Activated CD4-positive, alpha-beta T cell treated with anti-CD3 and anti-CD28 coated beads, Interleukin-2, amount 10 ng/mL, durations not matched to agents 24 days and 14 days (primary cell): ENCODE measurements at regions of chr2 and their contacts with region 1.

Region 1: DNA sequence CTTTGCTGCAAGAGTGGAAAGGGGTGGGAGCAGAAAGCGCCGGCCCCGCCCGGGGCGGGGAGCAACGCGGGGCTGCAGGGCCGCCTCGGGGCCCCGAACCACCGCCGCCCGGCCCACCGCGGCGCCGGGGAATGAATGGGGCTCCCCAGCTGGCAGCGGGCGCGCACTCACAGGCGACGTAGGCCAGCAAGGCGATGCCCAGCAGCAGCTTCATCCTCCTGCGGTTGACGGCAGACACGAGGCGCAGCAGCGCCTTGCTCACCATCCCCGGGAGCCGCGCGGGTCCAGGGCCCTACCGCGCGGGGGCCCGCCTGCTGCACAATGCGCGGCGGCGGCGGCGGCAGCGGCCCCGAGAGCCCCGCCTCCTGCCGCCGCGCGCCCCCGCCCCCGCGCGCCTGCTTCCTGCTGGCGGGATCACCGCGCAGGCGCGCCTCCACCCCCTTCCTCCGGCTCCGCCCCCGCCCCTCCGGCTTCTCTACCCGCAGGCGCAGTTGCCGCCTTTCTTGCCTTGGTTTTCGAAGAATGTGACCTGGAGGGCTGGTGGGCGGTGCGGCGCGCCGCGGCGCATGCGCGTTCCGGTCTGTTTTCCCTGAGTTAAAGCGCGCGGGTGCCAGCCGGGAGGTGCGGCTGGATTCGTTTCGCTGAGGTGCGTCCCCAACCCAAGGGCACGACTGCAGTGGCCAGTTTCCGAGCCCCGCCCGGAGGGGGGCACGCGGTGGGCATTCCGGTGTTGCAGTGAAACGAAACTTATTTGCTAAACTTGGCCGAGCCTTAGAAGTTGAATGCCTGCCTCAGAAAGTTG is at the start of gene UXS1:
- DNase-seq: peak; percentile 99
- H3K4me3 Mint-ChIP-seq: peak within 1 kb of the TSS; percentile 90
- H3K27ac Mint-ChIP-seq: peak within 1 kb of the TSS; percentile 89
- H3K4me1 Mint-ChIP-seq: peaks cover 38% of the 10 kb centered on the region
- H3K27me3 Mint-ChIP-seq: peaks cover 11% of the 10 kb centered on the region
- total RNA-seq, gene UXS1: 34.9 and 37.6 TPM in 2 replicates

Region 2: DNA sequence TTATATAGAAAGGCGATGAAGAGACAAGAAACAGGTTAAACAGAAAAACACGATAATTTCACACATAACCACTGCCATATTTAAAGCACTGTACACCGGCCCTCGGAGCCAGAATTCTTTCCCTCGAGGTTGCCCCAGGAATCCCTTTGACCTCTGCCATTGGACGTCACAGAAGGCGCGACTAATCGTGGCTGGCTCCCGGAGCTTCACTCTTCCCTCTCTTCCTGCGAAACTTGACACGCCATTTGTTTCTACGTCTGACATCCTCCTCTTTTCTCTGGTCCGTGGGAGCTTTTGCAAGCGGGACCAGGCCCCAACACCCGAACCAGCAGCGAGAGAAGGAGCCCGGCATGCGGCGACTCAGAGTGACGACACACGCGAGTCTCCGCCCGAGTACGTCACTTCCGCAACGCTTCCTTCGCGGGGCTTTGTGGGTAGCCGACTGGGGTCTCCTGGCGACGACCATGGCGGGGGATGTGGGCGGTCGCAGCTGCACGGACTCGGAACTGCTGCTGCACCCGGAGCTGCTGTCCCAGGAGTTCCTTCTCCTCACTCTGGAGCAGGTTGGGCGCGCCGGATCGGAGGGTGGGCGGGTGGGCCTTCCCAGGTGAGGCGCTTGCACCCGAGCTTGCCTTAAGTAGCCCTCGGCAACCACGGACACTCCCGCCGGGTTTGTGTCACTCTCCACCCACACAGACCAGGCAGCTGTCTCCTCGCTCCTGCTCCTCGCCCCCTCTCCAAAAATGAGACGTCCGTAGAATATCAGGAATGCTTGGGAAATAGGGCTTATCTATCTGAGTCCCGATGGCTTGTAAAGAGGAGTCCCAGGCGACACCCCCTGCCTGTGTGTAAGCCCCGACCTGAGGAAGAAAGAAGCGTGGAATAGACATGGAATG is 856.8 kb before region 1 on chr2 and contains the start of gene C2orf49:
- intact Hi-C with region 1: loop called (anchors 1 kb)
- DNase-seq: peak; percentile 97
- H3K4me3 Mint-ChIP-seq: peak within 1 kb of the TSS; percentile 92
- H3K27ac Mint-ChIP-seq: peak within 1 kb of the TSS; percentile 100
- H3K4me1 Mint-ChIP-seq: peaks cover 22% of the 10 kb centered on the region
- H3K27me3 Mint-ChIP-seq: no peaks in the 10 kb centered on the region
- total RNA-seq, gene C2orf49: 20.8 and 25.5 TPM in 2 replicates

Region 3: DNA sequence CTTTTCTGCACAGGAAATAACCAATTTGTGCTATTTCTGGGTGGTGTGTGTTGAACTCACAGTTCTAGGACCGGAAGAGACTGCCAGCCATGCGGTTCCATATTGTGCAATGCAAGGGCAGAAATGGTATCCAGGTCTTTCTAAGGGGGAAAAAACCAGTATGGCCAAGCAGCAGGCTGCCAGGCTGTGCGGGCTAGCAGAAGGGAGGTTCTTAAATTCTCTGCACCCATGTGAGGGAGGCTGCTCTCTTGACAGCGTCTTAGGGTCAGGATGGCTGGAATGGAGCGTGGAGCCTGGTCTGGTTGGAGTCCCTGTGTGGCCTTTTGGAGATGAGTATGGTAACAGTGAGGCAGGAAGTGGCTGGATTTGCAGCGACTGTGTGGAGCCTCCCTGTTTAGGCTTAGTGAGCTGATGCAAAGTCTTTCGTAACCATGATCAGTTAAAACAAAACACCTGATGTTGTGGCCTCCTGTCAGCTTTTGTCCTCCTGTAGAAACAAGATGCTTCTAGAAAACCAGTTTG is 396.8 kb before region 1 on chr2:
- intact Hi-C with region 1: loop called (anchors 5 kb)
- DNase-seq: peak; percentile 85
- H3K4me3 Mint-ChIP-seq: peak overlapping the region; percentile 63
- H3K27ac Mint-ChIP-seq: peak overlapping the region; percentile 93
- H3K4me1 Mint-ChIP-seq: peaks cover 80% of the 10 kb centered on the region
- H3K27me3 Mint-ChIP-seq: no peaks in the 10 kb centered on the region

Region 4: DNA sequence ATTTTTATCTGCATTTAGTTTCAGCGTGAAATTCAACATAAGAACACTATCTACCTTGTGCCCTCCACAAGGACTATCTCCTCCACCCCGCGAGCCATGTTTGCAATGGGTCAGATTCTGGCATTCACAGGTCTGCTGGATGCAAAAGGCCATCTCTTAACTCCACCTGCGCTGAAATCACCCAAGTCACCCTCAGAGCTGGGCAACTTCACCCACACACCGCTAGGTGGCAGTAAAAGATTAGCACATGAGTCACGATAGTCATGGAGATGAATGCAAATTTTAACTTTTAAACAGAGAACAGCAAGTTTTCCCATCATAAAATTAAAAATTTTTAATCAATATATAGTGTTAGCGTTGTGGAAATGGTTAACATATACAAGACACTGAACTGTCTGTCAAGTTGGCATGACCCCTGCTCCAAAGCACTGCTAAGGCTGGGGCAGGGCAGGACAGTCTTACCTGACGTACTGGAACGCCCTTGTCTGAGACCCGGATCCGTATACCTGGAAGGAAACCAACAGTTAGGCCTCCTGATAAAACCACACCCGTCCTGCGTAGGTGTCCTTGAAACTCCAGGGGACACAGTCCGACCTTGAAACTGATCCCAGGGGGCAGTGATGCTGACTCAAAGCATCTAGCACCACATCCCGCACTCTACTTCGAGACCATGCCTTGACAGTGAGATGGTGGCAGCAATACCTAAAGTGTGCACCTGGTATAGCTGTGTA is 89.7 kb before region 1 on chr2:
- intact Hi-C with region 1: loop called (anchors 1 kb)
- DNase-seq: peak; percentile 90
- H3K4me3 Mint-ChIP-seq: no peak overlapping the region
- H3K27ac Mint-ChIP-seq: no peak overlapping the region
- H3K4me1 Mint-ChIP-seq: peaks cover 15% of the 10 kb centered on the region
- H3K27me3 Mint-ChIP-seq: no peaks in the 10 kb centered on the region

Region 5: DNA sequence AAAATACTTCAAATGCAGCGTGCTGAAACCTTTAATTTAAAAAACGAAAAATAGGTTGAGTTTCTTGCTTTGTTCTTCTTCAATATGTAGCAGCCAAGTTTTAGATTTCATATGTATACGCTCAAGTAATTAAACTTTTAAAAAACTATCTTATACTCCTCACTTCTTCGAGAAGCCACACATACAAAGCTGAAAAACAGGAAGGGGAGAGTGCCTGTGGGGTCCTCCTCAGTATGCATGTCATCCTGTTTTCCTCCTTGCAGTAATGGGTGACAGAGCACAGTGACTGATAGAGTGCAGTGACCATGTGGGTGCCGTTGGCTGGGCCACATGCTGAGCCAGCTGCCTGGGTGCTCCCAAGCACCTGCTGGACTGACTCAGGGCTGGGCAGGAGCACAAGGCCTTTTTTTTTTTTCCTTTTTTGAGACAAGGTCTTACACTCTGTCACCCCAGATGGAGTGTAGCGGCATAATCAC is 33.4 kb before region 1 on chr2:
- intact Hi-C with region 1: loop called (anchors 1 kb)
- DNase-seq: peak; percentile 80
- H3K4me3 Mint-ChIP-seq: peak overlapping the region; percentile 82
- H3K27ac Mint-ChIP-seq: peak overlapping the region; percentile 90
- H3K4me1 Mint-ChIP-seq: peaks cover 57% of the 10 kb centered on the region
- H3K27me3 Mint-ChIP-seq: no peaks in the 10 kb centered on the region

Region 6: DNA sequence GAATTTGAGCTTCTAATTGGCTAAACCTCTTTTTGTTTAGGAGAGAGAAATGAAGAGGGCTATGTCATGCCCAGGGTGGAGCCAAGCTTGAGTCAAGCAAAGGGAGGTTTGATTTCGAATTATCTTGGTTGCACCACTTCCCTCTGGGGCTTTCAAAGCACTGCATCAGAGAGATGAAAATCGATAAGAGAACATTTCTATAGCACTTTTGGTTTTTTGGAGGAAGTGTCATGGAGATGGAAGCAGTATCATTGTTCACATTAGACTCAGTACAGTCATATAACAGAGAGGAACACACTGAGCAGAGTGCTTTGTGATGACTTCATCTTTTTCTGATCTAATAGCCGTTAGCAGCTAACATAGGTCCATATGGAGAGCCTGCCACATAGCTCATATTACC is 120.3 kb after region 1 on chr2:
- intact Hi-C with region 1: no loop called
- DNase-seq: peak; percentile 67
- H3K4me3 Mint-ChIP-seq: no peak overlapping the region
- H3K27ac Mint-ChIP-seq: no peak overlapping the region
- H3K4me1 Mint-ChIP-seq: peaks cover 7% of the 10 kb centered on the region
- H3K27me3 Mint-ChIP-seq: no peaks in the 10 kb centered on the region